ENCODE measurements at regions of chr20 and their contacts with region 1.

Region 1: DNA sequence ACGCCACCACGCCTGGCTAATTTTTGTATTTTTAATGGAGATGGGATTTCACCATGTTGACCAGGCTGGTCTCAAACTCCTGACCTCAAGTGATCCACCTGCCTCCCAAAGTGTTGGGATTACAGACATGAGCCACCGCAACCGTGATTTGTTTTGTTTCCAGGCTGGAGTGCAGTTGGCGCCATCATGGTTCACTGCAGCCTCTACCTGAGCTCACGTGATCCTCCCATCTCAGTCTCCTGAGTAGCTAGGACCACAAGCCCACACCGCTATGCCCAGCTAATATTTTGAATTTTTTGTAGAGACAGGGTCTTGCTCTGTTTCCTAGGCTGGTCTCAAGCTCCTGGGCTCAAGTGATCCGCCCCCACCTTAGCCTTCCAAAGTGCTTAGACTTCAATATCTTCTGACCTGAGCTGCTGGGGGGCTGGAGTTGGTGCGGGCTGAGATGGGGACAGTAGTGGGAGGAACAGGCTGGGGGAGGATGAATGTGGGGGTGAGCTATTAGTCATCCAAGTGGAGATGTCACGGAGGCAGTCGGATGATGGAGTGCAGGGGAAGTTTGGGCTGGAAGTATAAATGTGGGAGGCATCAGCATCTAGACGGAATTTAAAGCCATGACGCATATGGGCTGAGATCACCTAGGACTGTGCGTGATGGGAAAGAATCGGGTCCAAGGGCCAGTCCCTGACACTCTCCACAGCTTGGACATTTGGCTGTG is 23.1 kb upstream of the ZMYND8 start:
- DNase-seq: no peak
- ATAC-seq: no peak
- H3K4me3 Mint-ChIP-seq: no peak overlapping the region
- H3K27ac Mint-ChIP-seq: no peak overlapping the region
- H3K4me1 Mint-ChIP-seq: peaks cover 13% of the 10 kb centered on the region
- H3K27me3 Mint-ChIP-seq: no peaks in the 10 kb centered on the region
- CTCF ChIP-seq: no peak

Region 2: DNA sequence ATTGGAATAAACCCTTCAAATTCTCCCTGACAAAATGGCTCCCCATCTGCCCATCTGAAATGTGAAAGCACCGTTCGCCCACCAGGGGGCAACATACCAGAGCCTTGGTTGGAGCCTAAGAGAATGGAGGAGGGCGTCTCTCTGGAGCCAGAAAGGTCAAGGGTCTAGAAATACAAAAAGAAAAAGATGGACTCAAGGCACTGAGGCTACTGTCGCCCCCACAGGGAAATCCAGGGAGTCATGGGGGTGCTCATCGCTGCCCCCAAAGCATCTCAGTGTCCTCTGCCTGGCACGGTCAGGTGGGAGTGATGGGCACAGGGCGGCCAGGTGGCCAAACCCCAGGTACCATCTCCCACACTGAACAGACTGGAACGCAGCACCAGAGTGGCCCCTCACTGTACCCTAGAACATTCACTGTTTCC is 159.4 kb before region 1 on chr20:
- CTCF ChIA-PET with region 1: interaction called, 24 read pairs
- POLR2A ChIA-PET with region 1: no interaction called
- intact Hi-C with region 1: loop called (anchors 1 kb)
- DNase-seq: peak; percentile 27
- ATAC-seq: peak; percentile 42
- H3K4me3 Mint-ChIP-seq: no peak overlapping the region
- H3K27ac Mint-ChIP-seq: no peak overlapping the region
- H3K4me1 Mint-ChIP-seq: peaks cover 11% of the 10 kb centered on the region
- H3K27me3 Mint-ChIP-seq: no peaks in the 10 kb centered on the region
- CTCF ChIP-seq: no peak

Region 3: GRCh38 chr20:47272893-47273590 is 106.5 kb before region 1 on chr20:
- CTCF ChIA-PET with region 1: interaction called, 398 read pairs
- POLR2A ChIA-PET with region 1: interaction called, 47 read pairs
- intact Hi-C with region 1: loop called (anchors 1 kb)
- DNase-seq: no peak
- ATAC-seq: peak; percentile 76
- H3K4me3 Mint-ChIP-seq: no peak overlapping the region
- H3K27ac Mint-ChIP-seq: peak overlapping the region; percentile 60
- H3K4me1 Mint-ChIP-seq: peaks cover 36% of the 10 kb centered on the region
- H3K27me3 Mint-ChIP-seq: no peaks in the 10 kb centered on the region
- CTCF ChIP-seq: peak; percentile 34

Region 4: GRCh38 chr20:47317127-47317895 is 62.3 kb before region 1 on chr20:
- CTCF ChIA-PET with region 1: interaction called, 27 read pairs
- POLR2A ChIA-PET with region 1: interaction called, 3 read pairs
- intact Hi-C with region 1: no loop called
- DNase-seq: peak; percentile 18
- ATAC-seq: peak; percentile 70
- H3K4me3 Mint-ChIP-seq: peak overlapping the region; percentile 50
- H3K27ac Mint-ChIP-seq: peak overlapping the region; percentile 84
- H3K4me1 Mint-ChIP-seq: peaks cover 63% of the 10 kb centered on the region
- H3K27me3 Mint-ChIP-seq: no peaks in the 10 kb centered on the region
- CTCF ChIP-seq: no peak

Region 5: DNA sequence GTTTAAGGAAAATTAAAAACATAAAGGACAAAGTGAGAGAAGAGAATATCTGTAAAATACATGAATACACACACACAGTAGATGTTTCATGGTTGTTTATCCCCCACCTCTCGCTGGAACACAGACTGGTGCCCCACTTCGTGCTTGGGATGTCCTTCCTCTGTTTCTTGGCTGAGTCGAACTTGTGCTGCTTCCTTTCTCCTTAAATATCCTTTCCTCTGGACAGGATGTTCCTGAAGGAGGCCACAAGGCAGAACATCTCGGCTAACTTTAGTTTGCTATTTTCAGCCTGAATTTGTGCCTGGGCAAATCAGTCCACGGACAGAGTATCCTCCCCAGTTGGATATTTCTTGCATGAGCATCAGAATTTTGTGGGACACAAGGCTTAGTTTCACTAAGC is 31.6 kb after region 1 on chr20:
- CTCF ChIA-PET with region 1: interaction called, 55 read pairs
- POLR2A ChIA-PET with region 1: interaction called, 30 read pairs
- intact Hi-C with region 1: loop called (anchors 5 kb)
- DNase-seq: no peak
- ATAC-seq: no peak
- H3K4me3 Mint-ChIP-seq: peak overlapping the region; percentile 81
- H3K27ac Mint-ChIP-seq: peak overlapping the region; percentile 100
- H3K4me1 Mint-ChIP-seq: peaks cover 85% of the 10 kb centered on the region
- H3K27me3 Mint-ChIP-seq: no peaks in the 10 kb centered on the region
- CTCF ChIP-seq: no peak

Region 6: GRCh38 chr20:47501483-47502270 is 122.1 kb after region 1 on chr20 and contains the start of gene NCOA3:
- CTCF ChIA-PET with region 1: interaction called, 30 read pairs
- POLR2A ChIA-PET with region 1: interaction called, 33 read pairs
- intact Hi-C with region 1: loop called (anchors 2 kb)
- DNase-seq: peak; percentile 89
- ATAC-seq: peak; percentile 89
- H3K4me3 Mint-ChIP-seq: peak within 1 kb of the TSS; percentile 100
- H3K27ac Mint-ChIP-seq: peak within 1 kb of the TSS; percentile 98
- H3K4me1 Mint-ChIP-seq: peaks cover 59% of the 10 kb centered on the region
- H3K27me3 Mint-ChIP-seq: no peaks in the 10 kb centered on the region
- CTCF ChIP-seq: no peak
- total RNA-seq, gene NCOA3: 186 and 187 TPM in 2 replicates